Calu3 (cell line): ENCODE measurements at regions of chr3 and their contacts with region 1.

Region 1: DNA sequence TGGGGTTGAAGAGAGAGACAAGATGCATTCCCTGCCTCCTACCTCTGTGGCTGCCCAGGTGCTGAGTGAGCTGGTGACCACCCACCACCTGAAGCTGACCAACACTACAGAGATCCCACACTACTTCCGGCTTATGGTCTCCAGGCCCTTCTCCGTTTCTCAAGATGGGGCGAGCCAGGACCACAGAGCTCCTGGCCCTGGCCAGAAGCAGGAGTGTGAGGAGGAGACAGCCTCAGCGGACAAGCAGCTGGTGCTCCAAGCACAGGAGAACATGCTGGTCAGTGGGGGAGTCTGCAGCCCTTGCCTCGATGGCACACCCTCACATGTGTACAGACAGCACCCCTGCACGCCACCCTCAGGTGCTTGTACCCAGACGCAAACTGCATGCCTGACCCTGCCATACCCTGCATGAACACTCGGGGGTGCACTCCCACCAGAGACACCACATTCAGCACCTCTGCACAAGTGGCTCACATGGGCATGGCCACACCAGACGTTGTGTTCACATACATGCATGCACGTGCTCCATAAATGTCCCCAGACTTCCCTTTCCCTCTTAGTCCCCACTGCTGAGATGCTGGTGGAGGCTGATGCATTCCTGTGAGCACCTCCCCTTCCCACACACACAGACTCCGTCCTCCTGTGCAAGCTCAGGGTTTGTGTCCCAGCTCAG is 19.0 kb downstream of the ACAA1 start:
- DNase-seq: peak; percentile 80
- H3K4me3 Mint-ChIP-seq: no peak overlapping the region
- H3K27ac Mint-ChIP-seq: peak overlapping the region; percentile 47
- H3K4me1 Mint-ChIP-seq: peaks cover 9% of the 10 kb centered on the region
- H3K27me3 Mint-ChIP-seq: peaks cover 13% of the 10 kb centered on the region
- CTCF ChIP-seq: peak; percentile 68

Region 2: GRCh38 chr3:37863939-37864822 is 253.7 kb before region 1 on chr3:
- CTCF ChIA-PET with region 1: interaction called, 15 read pairs
- intact Hi-C with region 1: no loop called
- DNase-seq: peak; percentile 17
- H3K4me3 Mint-ChIP-seq: peak overlapping the region; percentile 95
- H3K27ac Mint-ChIP-seq: peak overlapping the region; percentile 79
- H3K4me1 Mint-ChIP-seq: peaks cover 41% of the 10 kb centered on the region
- H3K27me3 Mint-ChIP-seq: no peaks in the 10 kb centered on the region
- CTCF ChIP-seq: no peak

Region 3: GRCh38 chr3:38004415-38005076 is 113.3 kb before region 1 on chr3:
- CTCF ChIA-PET with region 1: no interaction called
- intact Hi-C with region 1: loop called (anchors 2 kb)
- DNase-seq: peak; percentile 84
- H3K4me3 Mint-ChIP-seq: peak overlapping the region; percentile 54
- H3K27ac Mint-ChIP-seq: peak overlapping the region; percentile 75
- H3K4me1 Mint-ChIP-seq: peaks cover 30% of the 10 kb centered on the region
- H3K27me3 Mint-ChIP-seq: no peaks in the 10 kb centered on the region
- CTCF ChIP-seq: peak; percentile 78

Region 4: DNA sequence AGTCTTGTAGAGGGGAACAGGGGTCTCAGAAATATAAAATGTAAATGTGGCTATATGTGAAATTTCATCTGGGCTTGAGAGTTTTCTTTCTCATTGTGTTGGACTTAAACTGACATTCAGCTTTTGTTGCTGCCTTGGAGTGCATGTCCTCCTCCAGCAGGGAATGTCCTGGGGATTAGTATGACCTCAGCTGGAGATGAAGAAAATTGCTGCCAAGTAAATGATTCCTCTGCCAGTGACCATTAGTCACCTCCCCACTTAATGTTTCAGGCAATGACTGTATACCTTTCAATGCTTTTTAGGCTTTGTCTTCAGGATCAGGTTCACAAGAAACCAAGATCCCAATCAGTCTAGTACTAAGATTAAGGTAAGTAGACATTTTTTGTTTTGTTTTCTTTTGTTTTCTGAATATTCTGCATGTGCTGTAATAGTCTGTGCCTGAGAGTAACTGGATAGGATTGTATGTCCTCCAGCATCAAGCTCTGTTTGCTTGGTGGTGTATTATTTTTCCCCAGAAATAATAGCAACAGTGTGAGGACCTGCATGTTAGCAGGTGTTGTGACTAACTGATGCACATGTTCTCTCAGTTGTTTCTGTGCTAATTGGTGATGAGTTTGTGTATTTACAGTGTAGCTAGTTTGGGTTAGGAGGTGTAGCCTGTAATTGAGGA is 129.6 kb after region 1 on chr3:
- CTCF ChIA-PET with region 1: interaction called, 3 read pairs
- intact Hi-C with region 1: loop called (anchors 5 kb)
- DNase-seq: peak; percentile 15
- H3K4me3 Mint-ChIP-seq: no peak overlapping the region
- H3K27ac Mint-ChIP-seq: peak overlapping the region; percentile 76
- H3K4me1 Mint-ChIP-seq: peaks cover 20% of the 10 kb centered on the region
- H3K27me3 Mint-ChIP-seq: no peaks in the 10 kb centered on the region
- CTCF ChIP-seq: no peak

Region 5: GRCh38 chr3:38297947-38298711 is 180.2 kb after region 1 on chr3:
- CTCF ChIA-PET with region 1: interaction called, 5 read pairs
- intact Hi-C with region 1: loop called (anchors 5 kb)
- DNase-seq: no peak
- H3K4me3 Mint-ChIP-seq: no peak overlapping the region
- H3K27ac Mint-ChIP-seq: no peak overlapping the region
- H3K4me1 Mint-ChIP-seq: no peaks in the 10 kb centered on the region
- H3K27me3 Mint-ChIP-seq: no peaks in the 10 kb centered on the region
- CTCF ChIP-seq: peak; percentile 65